Activated CD8-positive, alpha-beta T cell treated with anti-CD3 and anti-CD28 coated beads for 36 hours (primary cell): ENCODE measurements at regions of chr5 and their contacts with region 1.

Region 1: DNA sequence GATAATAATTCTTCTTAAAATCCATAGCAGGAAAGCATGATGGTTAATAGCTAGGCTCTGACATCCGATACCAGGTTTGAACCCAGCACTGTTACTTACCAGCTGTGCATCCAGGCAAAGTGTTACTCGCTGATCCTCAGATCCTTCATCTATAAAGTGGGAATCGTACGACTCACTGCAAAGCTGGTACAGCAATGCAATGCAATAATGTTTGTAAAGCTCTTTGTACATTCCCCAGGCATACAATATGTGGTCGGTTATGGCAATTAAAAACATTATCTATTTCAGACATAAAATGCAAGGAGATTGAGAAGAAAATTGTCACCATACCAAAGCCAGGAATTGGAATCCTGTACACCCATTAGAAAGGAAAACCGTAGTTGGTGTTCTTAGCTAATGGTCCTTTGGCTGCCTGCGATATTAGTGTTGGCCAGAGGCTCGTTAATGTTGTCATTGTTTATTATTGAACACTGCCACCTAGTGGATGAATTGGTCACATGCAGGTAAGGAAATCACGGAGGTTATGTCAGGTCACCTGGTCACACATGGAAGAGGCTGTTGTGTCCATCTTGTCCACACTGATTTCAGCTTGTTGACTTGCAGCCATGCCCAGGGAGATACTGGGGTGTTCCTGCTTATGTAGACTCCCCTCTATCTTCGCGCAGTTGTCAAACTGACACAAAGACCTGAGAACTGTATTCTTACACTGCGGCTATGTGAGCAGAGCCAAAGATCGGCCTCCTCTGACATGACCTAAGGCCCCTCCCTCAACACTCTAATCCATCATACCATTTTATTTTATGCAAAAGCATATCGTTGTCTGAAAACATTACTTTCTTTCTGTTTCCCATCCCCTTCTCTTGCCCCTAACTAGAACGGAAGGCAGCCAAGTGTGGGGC is 87.5 kb upstream of the PPP2R2B start:
- DNase-seq: peak; percentile 67
- ATAC-seq: peak; percentile 87
- H3K4me3 Mint-ChIP-seq: no peak overlapping the region
- H3K27ac Mint-ChIP-seq: no peak overlapping the region
- H3K4me1 Mint-ChIP-seq: peaks cover 3% of the 10 kb centered on the region
- H3K27me3 Mint-ChIP-seq: no peaks in the 10 kb centered on the region
- CTCF ChIP-seq: peak; percentile 86

Region 2: GRCh38 chr5:146541958-146542849 is 423.8 kb before region 1 on chr5:
- CTCF ChIA-PET with region 1: interaction called, 58 read pairs
- POLR2A ChIA-PET with region 1: no interaction called
- intact Hi-C with region 1: loop called (anchors 5 kb)
- DNase-seq: peak; percentile 83
- ATAC-seq: peak; percentile 98
- H3K4me3 Mint-ChIP-seq: no peak overlapping the region
- H3K27ac Mint-ChIP-seq: no peak overlapping the region
- H3K4me1 Mint-ChIP-seq: no peaks in the 10 kb centered on the region
- H3K27me3 Mint-ChIP-seq: peaks cover 1% of the 10 kb centered on the region
- CTCF ChIP-seq: peak; percentile 93

Region 3: DNA sequence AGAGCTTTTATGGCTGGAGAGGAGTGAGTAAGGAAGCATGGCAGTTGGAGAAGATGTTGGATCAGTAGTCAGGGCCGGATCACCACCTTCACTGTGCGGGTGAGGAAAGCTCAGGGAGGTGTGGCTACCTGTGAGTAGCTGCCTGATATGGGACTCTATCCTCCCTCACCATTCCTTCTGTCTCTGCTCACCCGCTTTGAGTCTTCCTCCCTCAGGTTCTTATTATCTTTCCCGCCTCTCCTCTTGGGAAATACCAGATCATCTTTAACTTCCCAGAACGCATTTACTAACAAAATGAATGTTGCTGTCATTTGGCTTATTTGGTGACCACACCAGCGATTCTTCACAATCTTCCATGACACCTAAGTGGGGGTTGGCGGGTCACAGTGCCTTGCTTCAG is 309.3 kb before region 1 on chr5:
- CTCF ChIA-PET with region 1: interaction called, 59 read pairs
- POLR2A ChIA-PET with region 1: no interaction called
- intact Hi-C with region 1: loop called (anchors 2 kb)
- DNase-seq: no peak
- ATAC-seq: no peak
- H3K4me3 Mint-ChIP-seq: no peak overlapping the region
- H3K27ac Mint-ChIP-seq: no peak overlapping the region
- H3K4me1 Mint-ChIP-seq: no peaks in the 10 kb centered on the region
- H3K27me3 Mint-ChIP-seq: no peaks in the 10 kb centered on the region
- CTCF ChIP-seq: no peak

Region 4: GRCh38 chr5:146944764-146945616 is 21.0 kb before region 1 on chr5:
- CTCF ChIA-PET with region 1: interaction called, 17 read pairs
- POLR2A ChIA-PET with region 1: no interaction called
- intact Hi-C with region 1: no loop called
- DNase-seq: no peak
- ATAC-seq: no peak
- H3K4me3 Mint-ChIP-seq: no peak overlapping the region
- H3K27ac Mint-ChIP-seq: no peak overlapping the region
- H3K4me1 Mint-ChIP-seq: peaks cover 5% of the 10 kb centered on the region
- H3K27me3 Mint-ChIP-seq: no peaks in the 10 kb centered on the region
- CTCF ChIP-seq: no peak